Activated B cell treated with CpG ODN at 0.5 μM for 24 hours (primary cell): ENCODE measurements at regions of chr1 and their contacts with region 1.

Region 1: GRCh38 chr1:155017041-155017945 is 14.7 kb downstream of the ZBTB7B start:
- DNase-seq: peak; percentile 88
- ATAC-seq: peak; percentile 77
- H3K4me3 Mint-ChIP-seq: peak overlapping the region; percentile 79
- H3K27ac Mint-ChIP-seq: peak overlapping the region; percentile 88
- H3K4me1 Mint-ChIP-seq: peaks cover 71% of the 10 kb centered on the region
- H3K27me3 Mint-ChIP-seq: no peaks in the 10 kb centered on the region
- CTCF ChIP-seq: no peak

Region 2: DNA sequence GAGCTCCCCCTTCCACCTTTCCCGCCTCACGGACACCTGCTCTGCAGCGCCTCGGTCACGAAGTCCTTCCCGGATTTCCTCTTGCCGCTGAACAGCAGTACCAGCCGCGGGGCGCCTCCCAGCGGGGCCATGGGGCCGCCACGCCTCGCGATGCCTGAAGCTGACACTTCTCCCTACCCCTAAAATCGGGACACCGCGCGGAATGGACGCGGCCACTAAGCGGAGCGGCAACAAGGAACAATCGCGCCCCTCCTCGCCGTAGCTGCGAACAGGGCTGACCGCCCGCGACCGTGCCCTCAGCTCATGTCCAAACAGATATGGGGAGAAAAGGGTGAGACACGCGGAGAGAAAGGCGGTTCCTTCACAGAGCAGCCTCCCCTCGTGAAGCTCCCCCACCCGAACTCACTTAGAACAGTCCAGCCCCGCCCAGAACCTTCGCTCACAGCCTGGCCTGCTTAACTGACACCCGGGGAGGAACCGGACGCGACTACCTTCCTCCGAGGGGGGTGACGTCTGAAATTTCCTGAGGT is 80.7 kb before region 1 on chr1 and contains the start of gene PMVK:
- CTCF ChIA-PET with region 1: interaction called, 10 read pairs
- POLR2A ChIA-PET with region 1: interaction called, 24 read pairs
- intact Hi-C with region 1: loop called (anchors 1 kb)
- DNase-seq: peak; percentile 90
- ATAC-seq: peak; percentile 90
- H3K4me3 Mint-ChIP-seq: peak within 1 kb of the TSS; percentile 98
- H3K27ac Mint-ChIP-seq: peak within 1 kb of the TSS; percentile 100
- H3K4me1 Mint-ChIP-seq: peaks cover 58% of the 10 kb centered on the region
- H3K27me3 Mint-ChIP-seq: no peaks in the 10 kb centered on the region
- CTCF ChIP-seq: no peak
- total RNA-seq, gene PMVK: 24.6 and 26.3 TPM in 2 replicates

Region 3: DNA sequence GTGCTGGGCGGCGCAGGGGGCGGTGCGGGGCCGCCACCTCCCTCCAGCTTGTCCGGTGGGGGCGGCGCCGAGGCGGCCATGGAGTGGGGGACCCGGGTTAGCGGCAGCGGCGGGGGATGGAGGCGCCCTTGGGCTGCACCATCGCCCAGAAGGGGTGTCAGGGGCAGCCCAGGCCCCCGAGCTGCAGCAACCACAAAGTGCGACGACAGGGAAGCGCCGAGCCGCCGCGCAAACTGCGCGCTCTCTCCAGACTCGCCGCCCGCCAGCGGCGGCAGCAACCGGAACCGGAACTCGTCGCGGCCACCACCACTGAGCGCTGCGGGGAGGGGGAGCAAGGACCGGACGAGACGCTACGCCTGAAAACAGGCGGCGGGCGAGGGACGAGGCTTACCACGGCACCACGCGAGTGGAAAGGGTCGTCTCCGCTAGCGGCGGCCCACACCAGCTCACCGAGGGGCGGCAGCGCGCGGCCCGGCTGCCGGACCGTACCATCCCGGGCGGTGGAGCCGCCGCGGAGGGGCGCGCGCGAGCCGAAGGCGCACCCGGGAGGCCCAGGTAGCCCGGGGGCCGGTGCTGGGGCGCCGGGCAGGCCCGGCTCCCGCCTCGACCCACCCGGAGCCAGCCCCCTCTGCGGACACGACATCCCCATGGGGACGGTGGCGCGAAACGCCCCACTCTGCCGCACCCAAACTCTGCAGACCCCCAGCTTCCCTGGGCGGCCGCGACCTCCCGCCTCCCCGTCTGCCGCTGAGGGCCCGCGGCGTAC is 55.6 kb before region 1 on chr1 and contains the start of gene PYGO2:
- CTCF ChIA-PET with region 1: interaction called, 26 read pairs
- POLR2A ChIA-PET with region 1: interaction called, 22 read pairs
- intact Hi-C with region 1: loop called (anchors 1 kb)
- DNase-seq: peak; percentile 85
- ATAC-seq: peak; percentile 88
- H3K4me3 Mint-ChIP-seq: peak within 1 kb of the TSS; percentile 87
- H3K27ac Mint-ChIP-seq: peak within 1 kb of the TSS; percentile 86
- H3K4me1 Mint-ChIP-seq: peaks cover 45% of the 10 kb centered on the region
- H3K27me3 Mint-ChIP-seq: no peaks in the 10 kb centered on the region
- CTCF ChIP-seq: no peak
- total RNA-seq, gene PYGO2: 33.1 and 38.1 TPM in 2 replicates

Region 4: GRCh38 chr1:154982897-154983648 is 34.2 kb before region 1 on chr1 and contains the start of gene FLAD1:
- CTCF ChIA-PET with region 1: interaction called, 26 read pairs
- POLR2A ChIA-PET with region 1: interaction called, 16 read pairs
- intact Hi-C with region 1: loop called (anchors 2 kb)
- DNase-seq: peak; percentile 81
- ATAC-seq: peak; percentile 100
- H3K4me3 Mint-ChIP-seq: no peak within 1 kb of the TSS
- H3K27ac Mint-ChIP-seq: no peak within 1 kb of the TSS
- H3K4me1 Mint-ChIP-seq: peaks cover 9% of the 10 kb centered on the region
- H3K27me3 Mint-ChIP-seq: no peaks in the 10 kb centered on the region
- CTCF ChIP-seq: no peak
- total RNA-seq, gene FLAD1: 64.1 and 69.0 TPM in 2 replicates

Region 5: GRCh38 chr1:155001675-155002463 is 15.4 kb before region 1 on chr1:
- CTCF ChIA-PET with region 1: interaction called, 35 read pairs
- POLR2A ChIA-PET with region 1: interaction called, 85 read pairs
- intact Hi-C with region 1: loop called (anchors 1 kb)
- DNase-seq: peak; percentile 94
- ATAC-seq: peak; percentile 81
- H3K4me3 Mint-ChIP-seq: peak overlapping the region; percentile 94
- H3K27ac Mint-ChIP-seq: peak overlapping the region; percentile 95
- H3K4me1 Mint-ChIP-seq: peaks cover 51% of the 10 kb centered on the region
- H3K27me3 Mint-ChIP-seq: no peaks in the 10 kb centered on the region
- CTCF ChIP-seq: no peak

Region 6: GRCh38 chr1:155050560-155051341 is 33.5 kb after region 1 on chr1 and contains the start of gene ADAM15:
- CTCF ChIA-PET with region 1: interaction called, 13 read pairs
- POLR2A ChIA-PET with region 1: interaction called, 7 read pairs
- intact Hi-C with region 1: loop called (anchors 2 kb)
- DNase-seq: peak; percentile 78
- ATAC-seq: peak; percentile 83
- H3K4me3 Mint-ChIP-seq: peak within 1 kb of the TSS; percentile 86
- H3K27ac Mint-ChIP-seq: no peak within 1 kb of the TSS
- H3K4me1 Mint-ChIP-seq: peaks cover 22% of the 10 kb centered on the region
- H3K27me3 Mint-ChIP-seq: no peaks in the 10 kb centered on the region
- CTCF ChIP-seq: peak; percentile 56
- total RNA-seq, gene ADAM15: 11.3 and 13.7 TPM in 2 replicates